Tibial artery (tissue), 4 donors: ENCODE measurements at regions of chr3 and their contacts with region 1.

Region 1: DNA sequence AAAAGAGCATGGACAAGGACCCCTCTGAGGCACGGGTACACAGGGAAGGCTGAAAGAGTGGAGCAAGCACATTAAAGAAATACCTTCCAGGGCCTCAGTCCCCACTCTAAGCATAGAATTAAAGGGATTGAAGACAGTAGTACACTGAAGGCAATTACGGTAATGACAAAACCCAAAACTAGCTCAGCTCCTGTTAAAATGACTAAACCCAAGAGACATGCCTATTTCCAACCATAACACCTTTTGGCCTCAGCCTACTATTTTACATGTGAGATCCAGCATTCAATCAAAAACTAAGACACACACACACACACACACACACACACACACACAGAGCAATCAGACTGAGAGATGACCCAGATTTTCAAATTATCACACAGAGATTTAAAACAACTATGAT is 19.8 kb downstream of the MAP4 start:
- DNase-seq: no peak
- H3K4me3 ChIP-seq: no peak overlapping the region
- H3K27ac ChIP-seq: no peak overlapping the region
- H3K4me1 ChIP-seq: peaks cover 0 to 61% (median 20%) of the 10 kb centered on the region in 4 donors
- H3K27me3 ChIP-seq: no peaks in the 10 kb centered on the region
- CTCF ChIP-seq: no peak

Region 2: DNA sequence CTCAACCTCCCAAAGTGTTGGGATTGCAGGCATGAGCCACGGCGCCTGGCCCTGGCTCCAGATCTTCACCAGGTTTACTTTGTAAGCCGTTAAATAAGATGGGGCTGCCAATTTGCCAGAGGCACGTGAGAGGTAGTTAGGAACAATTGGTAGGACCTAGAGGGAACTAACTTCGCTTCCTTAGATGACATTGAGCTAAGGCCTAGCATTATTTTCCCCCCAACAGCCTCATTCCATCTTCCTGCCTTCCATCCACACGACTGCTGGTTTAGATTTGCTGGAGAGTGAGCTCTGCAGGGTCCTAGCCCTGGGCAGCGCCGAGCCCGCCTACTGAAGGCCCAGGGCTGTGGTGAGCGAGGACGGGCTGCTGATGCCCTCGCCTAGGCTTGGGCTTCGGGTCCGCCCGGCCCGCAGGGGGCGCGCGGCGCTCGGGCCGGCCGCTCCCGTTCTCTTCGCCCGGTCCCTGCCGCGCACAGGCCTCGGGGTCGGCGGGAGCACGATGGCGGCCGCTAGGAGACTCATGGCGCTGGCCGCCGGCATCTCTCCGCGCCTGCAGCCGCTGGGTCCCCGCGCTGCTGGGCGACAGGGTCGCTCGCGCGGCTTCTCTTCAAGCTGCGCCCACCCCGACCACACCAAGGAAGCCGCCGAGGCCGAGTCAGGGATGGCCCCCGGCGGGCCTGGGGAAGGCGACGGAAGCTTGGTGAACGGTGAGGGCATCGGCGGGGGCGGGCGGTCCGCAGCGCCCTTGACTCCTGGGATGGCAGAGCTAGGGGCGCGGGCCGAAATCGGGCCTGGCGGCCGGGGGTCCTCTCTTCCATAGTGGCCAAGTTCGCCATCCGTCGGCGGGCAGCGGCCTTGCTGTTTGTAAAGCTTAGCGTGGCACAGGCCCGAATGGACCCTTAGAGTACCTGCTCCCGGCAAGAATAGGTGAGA is 171.6 kb before region 1 on chr3:
- intact Hi-C with region 1: loop called (anchors 5 kb)
- DNase-seq: peak; percentile 65 to 85
- H3K4me3 ChIP-seq: peak overlapping the region; percentile 86
- H3K27ac ChIP-seq: peak overlapping the region; percentile 78 to 79
- H3K4me1 ChIP-seq: peaks cover 0 to 26% (median 18%) of the 10 kb centered on the region in 4 donors
- H3K27me3 ChIP-seq: no peaks in the 10 kb centered on the region
- CTCF ChIP-seq: peak; percentile 88 to 92

Region 3: DNA sequence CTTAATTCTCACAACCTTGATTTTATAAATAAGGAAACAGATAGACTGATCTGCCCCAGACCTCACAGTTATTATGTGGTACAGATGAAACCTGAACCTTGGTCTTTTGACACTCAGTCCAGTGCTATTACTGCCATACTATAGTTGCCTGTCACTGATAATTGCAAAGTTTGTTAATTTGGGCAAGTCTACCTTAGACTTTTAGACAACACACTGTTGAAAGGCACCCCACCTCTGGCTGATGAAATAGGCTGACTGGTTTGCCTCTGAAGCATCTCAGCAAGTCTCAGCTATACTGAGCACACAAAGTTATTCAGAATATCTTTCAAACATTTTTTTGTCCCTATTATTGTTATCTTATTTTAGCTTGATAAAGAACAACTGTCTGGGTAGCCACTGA is 72.9 kb after region 1 on chr3:
- intact Hi-C with region 1: no loop called
- DNase-seq: no peak
- H3K4me3 ChIP-seq: no peak overlapping the region
- H3K27ac ChIP-seq: no peak overlapping the region
- H3K4me1 ChIP-seq: peaks cover 0 to 90% (median 37%) of the 10 kb centered on the region in 4 donors
- H3K27me3 ChIP-seq: no peaks in the 10 kb centered on the region
- CTCF ChIP-seq: no peak